CD4-positive, alpha-beta memory T cell (primary cell): ENCODE measurements at regions of chr16 and their contacts with region 1.

Region 1: DNA sequence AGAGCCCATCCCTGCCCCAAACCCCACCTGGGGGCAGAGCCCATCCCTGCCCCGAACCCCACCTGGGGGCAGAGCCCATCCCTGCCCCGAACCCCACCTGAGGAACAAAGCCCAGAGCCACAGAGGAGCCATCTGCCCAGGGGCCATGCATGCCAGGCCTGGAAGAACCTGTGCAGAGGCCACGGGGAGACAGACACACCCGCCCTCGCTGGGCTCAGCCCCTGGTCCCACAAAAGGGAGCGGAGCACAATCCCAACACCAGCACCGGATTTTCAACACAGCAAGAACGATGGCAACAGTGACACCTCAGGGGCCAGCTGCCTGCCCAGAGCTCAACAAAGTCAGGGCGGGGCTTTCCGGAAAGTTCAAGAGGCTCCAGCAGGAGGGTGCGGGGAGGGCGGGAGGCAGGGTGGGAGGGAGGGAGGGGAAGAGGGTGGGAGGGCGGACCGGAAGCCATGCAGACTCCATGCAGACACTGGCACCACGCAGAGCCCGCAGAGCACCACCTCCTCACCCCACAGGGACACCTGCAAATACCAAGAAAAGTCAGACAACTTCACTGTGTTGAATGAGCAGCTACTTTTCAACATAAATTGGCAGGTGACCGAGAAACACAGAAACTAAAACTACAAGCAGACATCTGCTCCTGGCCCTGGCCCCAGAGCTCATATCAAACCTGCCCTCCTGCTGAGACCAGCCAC is 27.9 kb upstream of the C16orf95 start:
- DNase-seq: peak; percentile 2 to 75 (median 47)
- H3K4me3 ChIP-seq: no peak overlapping the region
- H3K4me3 Mint-ChIP-seq: peak overlapping the region in 7 of 8 donors; percentile 51 to 78 (median 68)
- H3K27ac ChIP-seq: no peak overlapping the region
- H3K27ac Mint-ChIP-seq: peak overlapping the region; percentile 72 to 97 (median 93)
- H3K4me1 ChIP-seq: peaks cover 20% of the 10 kb centered on the region
- H3K4me1 Mint-ChIP-seq: peaks cover 14 to 45% (median 24%) of the 10 kb centered on the region in 4 donors
- H3K27me3 ChIP-seq: no peaks in the 10 kb centered on the region
- H3K27me3 Mint-ChIP-seq: no peaks in the 10 kb centered on the region

Region 2: DNA sequence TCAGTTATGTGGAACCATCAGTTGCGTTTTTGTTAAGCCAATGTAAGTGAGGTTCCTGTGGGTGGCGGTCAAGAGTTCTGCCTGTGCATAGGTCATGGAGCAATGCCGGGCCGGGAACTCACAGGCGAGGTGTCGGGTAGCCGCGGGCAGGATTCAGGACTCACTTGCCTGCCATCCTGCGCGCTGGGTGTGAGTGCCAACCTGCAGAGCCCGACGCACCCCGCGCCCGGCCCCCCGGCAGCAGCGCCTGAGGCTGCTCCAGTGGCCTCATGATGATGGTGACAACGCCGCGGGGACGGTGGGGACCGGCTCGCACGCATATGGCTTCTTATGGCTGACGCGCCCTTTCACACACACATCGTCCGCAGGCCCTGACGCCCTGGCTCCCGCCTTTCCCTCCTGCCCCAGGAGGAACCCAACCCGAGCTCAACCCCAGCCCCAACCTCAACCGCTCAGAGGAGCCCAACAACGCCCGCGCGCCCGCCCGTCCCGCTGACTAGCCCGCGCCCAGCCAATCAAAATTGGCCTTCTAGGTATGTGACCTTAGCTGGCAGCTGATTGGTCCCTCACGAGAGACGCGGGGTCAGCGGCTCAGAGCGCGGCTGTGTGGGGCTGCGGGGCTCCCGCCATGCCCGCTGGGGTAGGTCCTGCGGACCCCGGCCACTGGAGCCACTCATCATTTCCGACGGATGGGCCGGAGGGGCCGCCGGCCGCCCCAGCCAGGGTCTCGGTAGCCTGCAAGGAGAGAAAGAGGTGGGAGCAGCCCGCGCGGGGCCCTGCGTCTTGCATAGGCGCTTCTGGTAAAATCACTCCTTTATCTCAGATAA is 27.9 kb before region 1 on chr16 and contains the start of gene C16orf95:
- CTCF ChIA-PET with region 1: interaction called, 3 read pairs
- POLR2A ChIA-PET with region 1: interaction called, 6 read pairs
- intact Hi-C with region 1: loop called (anchors 1 kb)
- DNase-seq: peak; percentile 95 to 99 (median 95)
- H3K4me3 ChIP-seq: peak within 1 kb of the TSS; percentile 64 to 88
- H3K4me3 Mint-ChIP-seq: peak within 1 kb of the TSS; percentile 91 to 97 (median 95)
- H3K27ac ChIP-seq: peak within 1 kb of the TSS; percentile 77
- H3K27ac Mint-ChIP-seq: peak within 1 kb of the TSS; percentile 93 to 98 (median 95)
- H3K4me1 ChIP-seq: peaks cover 9% of the 10 kb centered on the region
- H3K4me1 Mint-ChIP-seq: peaks cover 10 to 21% (median 15%) of the 10 kb centered on the region in 4 donors
- H3K27me3 ChIP-seq: no peaks in the 10 kb centered on the region
- H3K27me3 Mint-ChIP-seq: no peaks in the 10 kb centered on the region
- total RNA-seq, gene C16orf95: 1.6 TPM